Activated CD4-positive, alpha-beta T cell treated with anti-CD3 and anti-CD28 coated beads, Interleukin-2, amount 10 ng/mL, durations not matched to agents 7 days and 5 days (primary cell): ENCODE measurements at regions of chr20 and their contacts with region 1.

Region 1: GRCh38 chr20:35303735-35304491 is 11.7 kb upstream of the FAM83C start:
- DNase-seq: peak; percentile 91
- H3K4me3 Mint-ChIP-seq: no peak overlapping the region
- H3K27ac Mint-ChIP-seq: peak overlapping the region; percentile 48
- H3K4me1 Mint-ChIP-seq: peaks cover 44% of the 10 kb centered on the region
- H3K27me3 Mint-ChIP-seq: no peaks in the 10 kb centered on the region

Region 2: GRCh38 chr20:35284267-35284991 is 19.5 kb before region 1 on chr20 and contains the start of gene EIF6:
- CTCF ChIA-PET with region 1: interaction called, 45 read pairs
- POLR2A ChIA-PET with region 1: interaction called, 4 read pairs
- DNase-seq: peak; percentile 82
- H3K4me3 Mint-ChIP-seq: peak within 1 kb of the TSS; percentile 88
- H3K27ac Mint-ChIP-seq: peak within 1 kb of the TSS; percentile 95
- H3K4me1 Mint-ChIP-seq: peaks cover 30% of the 10 kb centered on the region
- H3K27me3 Mint-ChIP-seq: no peaks in the 10 kb centered on the region
- total RNA-seq, gene EIF6: 87.4 to 93.3 TPM

Region 3: GRCh38 chr20:35318502-35319157 is 14.7 kb after region 1 on chr20:
- CTCF ChIA-PET with region 1: interaction called, 90 read pairs
- POLR2A ChIA-PET with region 1: no interaction called
- DNase-seq: no peak
- H3K4me3 Mint-ChIP-seq: no peak overlapping the region
- H3K27ac Mint-ChIP-seq: no peak overlapping the region
- H3K4me1 Mint-ChIP-seq: peaks cover 45% of the 10 kb centered on the region
- H3K27me3 Mint-ChIP-seq: no peaks in the 10 kb centered on the region

Region 4: DNA sequence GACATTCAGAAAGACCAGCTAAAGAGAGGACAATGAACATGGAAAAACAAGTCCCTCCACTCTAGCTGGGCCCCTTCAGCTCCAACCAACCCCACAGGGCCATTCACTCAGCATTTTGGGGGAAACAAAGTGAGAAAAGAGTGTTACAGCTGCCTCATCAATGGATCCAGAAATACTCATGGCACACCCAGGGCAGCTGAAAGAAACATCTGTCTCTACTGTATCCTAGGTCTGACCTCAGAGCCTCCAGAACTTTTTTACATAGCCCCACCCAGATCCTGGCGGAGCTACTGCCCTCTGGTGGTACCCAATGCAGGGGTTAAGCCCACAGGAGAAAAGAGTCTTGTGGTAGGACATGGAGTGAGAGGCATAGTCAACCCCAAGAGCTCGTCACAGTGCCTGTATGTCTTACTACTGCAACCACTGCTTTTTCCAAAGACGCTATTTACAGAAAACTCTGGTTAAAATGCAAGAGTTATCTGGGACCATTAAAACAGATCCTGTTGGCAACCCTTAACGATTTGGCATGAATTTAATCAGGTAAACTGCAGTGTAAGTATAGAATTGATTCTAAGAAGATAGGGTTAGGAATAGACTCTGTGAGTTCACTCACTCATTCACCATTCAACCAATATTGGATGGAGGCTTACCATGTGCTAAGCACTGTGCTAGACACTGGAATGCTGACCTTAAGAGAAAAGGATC is 25.7 kb after region 1 on chr20:
- CTCF ChIA-PET with region 1: interaction called, 90 read pairs
- POLR2A ChIA-PET with region 1: no interaction called
- DNase-seq: peak; percentile 50
- H3K4me3 Mint-ChIP-seq: no peak overlapping the region
- H3K27ac Mint-ChIP-seq: no peak overlapping the region
- H3K4me1 Mint-ChIP-seq: peaks cover 4% of the 10 kb centered on the region
- H3K27me3 Mint-ChIP-seq: no peaks in the 10 kb centered on the region

Region 5: DNA sequence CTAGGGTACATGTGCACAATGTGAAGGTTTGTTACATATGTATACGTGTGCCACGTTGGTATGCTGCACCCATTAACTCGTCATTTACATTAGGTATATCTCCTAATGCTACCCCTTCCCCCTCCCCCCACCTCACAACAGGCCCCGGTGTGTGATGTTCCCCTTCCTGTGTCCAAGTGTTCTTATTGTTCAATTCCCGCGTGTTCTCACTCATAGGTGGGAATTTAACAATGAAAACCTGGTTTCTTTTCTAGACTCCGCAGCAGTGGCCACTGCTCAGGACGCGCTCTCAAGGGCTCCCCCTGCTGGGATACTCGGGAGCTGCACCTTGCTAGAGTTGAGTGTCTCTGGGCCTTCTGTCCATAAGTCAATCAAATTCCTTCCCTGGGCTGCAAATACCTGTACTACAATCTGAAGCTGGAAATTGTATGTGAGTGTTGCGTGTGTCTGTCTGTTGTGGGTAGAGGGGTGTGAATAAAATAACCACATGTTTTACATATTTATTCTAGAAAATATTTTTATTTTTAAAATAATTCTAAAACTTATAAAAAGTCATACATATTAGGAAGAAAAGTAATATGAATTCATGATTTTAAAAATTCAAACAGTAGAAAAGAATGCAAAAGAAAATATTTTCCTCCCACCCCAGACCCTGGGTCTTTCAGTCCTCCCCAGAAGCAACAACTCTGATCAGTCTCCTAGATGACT is 143.3 kb after region 1 on chr20:
- CTCF ChIA-PET with region 1: interaction called, 19 read pairs
- POLR2A ChIA-PET with region 1: no interaction called
- DNase-seq: peak; percentile 93
- H3K4me3 Mint-ChIP-seq: peak overlapping the region; percentile 81
- H3K27ac Mint-ChIP-seq: peak overlapping the region; percentile 16
- H3K4me1 Mint-ChIP-seq: peaks cover 6% of the 10 kb centered on the region
- H3K27me3 Mint-ChIP-seq: peaks cover 2% of the 10 kb centered on the region